Activated naive CD4-positive, alpha-beta T cell treated with anti-CD3 and anti-CD28 coated beads for 36 hours (primary cell): ENCODE measurements at regions of chr4 and their contacts with region 1.

Region 1: DNA sequence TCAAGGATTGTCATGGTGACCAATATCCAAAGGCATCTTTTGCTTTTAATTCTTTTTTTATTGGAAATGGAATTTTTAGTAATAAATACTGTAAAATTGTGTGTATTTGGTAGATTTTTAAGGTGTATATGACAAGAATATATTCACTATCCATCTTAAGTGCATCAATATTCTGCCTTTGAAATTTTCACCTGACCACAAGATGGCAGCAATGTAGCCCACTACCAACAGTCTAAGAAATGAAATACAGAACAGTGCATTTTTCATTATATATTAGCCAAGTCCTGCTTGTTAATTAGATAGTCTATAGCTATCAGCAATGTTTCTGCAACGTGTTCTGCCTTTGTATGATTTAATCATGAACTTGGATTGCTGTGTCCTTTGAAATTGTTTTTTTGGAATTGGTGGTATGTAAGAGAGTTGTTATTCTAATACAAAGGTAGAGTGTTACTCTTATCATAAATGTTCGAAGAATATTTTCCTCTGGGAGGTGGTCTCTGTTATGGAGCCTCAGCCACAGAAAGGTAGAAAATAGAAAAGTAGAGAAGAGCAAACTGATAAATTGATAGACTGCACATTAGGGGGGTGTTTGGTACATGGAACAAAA is 38.2 kb downstream of the HPGDS start:
- DNase-seq: peak; percentile 40
- H3K4me3 Mint-ChIP-seq: no peak overlapping the region
- H3K27ac Mint-ChIP-seq: no peak overlapping the region
- H3K4me1 Mint-ChIP-seq: no peaks in the 10 kb centered on the region
- H3K27me3 Mint-ChIP-seq: no peaks in the 10 kb centered on the region

Region 2: GRCh38 chr4:94390804-94391410 is 86.4 kb after region 1 on chr4:
- CTCF ChIA-PET with region 1: interaction called, 15 read pairs
- intact Hi-C with region 1: loop called (anchors 1 kb)
- DNase-seq: peak; percentile 47
- H3K4me3 Mint-ChIP-seq: no peak overlapping the region
- H3K27ac Mint-ChIP-seq: no peak overlapping the region
- H3K4me1 Mint-ChIP-seq: no peaks in the 10 kb centered on the region
- H3K27me3 Mint-ChIP-seq: peaks cover 7% of the 10 kb centered on the region

Region 3: GRCh38 chr4:94595879-94596483 is 291.5 kb after region 1 on chr4:
- CTCF ChIA-PET with region 1: no interaction called
- intact Hi-C with region 1: loop called (anchors 1 kb)
- DNase-seq: no peak
- H3K4me3 Mint-ChIP-seq: no peak overlapping the region
- H3K27ac Mint-ChIP-seq: no peak overlapping the region
- H3K4me1 Mint-ChIP-seq: no peaks in the 10 kb centered on the region
- H3K27me3 Mint-ChIP-seq: no peaks in the 10 kb centered on the region